ENCODE measurements at regions of chr11 and their contacts with region 1.

Region 1: DNA sequence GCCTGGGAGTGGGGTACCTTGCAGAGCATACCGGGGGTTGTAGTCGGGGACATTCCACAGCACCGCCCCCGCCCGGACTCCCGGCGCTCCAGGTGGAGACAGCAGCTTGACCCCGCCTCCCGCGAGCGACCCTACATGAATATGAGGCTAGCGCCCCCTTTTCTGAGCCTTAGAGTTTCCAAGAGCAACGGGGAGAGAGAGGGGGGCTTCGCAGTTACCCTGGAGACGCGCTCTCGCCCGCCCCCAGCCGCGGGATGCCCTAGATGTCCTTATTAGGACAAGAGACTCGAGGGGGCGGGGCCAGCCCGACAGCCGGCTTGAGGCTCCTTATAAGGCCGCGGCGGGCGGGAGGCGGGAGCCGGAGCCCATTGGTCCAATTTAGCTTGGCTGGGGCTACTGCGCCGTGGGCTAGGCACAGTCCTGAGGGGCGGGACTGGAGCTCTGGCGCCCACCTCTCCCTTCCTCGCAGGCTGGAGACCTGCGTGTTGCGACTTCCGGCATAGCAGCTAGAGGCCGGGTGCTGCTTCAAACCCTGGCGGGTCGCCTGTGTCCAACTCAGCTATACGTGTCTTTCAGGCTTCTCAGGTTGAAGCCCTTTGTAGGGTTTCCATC is 927 bp upstream of the MUS81 start:
- DNase-seq: peak; percentile 97
- H3K4me3 ChIP-seq: peak overlapping the region; percentile 93
- H3K27ac ChIP-seq: peak overlapping the region; percentile 99
- H3K27me3 ChIP-seq: no peaks in the 10 kb centered on the region
- CTCF ChIP-seq: peak; percentile 28; the same call in 1 of the 2 replicates

Region 2: DNA sequence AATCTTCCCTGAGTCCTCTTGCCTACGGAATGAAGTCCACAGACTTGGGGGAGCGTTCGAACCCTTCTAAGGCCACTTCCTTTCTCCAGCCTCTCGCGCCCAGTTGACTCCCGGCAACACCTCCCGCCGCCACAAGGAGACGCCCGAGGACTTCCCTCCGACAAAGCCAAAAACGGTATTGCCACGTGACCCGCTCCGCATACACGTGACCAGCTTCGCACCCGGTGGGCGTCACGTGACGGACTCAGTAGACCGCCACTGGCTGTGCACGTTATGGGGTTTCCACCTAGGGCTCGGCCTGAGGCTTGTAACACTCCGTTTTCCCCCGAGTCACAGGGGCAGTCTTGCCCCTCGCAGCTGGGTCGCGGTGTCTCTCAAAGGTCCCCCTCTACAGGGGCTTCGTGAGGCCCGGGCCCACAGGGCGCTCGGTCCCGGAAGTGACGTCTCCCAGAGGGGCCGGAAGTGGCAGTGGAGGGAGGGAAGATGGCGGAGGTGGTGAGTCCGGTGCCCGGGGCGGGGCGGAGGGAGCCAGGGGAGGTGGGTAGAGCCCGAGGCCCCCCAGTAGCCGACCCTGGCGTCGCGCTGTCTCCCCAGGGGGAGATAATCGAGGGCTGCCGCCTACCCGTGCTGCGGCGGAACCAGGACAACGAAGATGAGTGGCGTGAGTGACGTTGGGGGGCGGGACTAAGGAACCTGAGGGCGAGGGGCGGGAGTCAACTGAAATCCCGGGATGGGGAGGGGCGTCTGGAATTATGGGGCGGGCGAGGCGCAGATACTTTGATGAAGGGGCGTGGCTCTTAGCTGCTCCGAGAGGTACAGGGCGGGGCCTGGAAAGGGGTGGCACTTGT is 147.3 kb before region 1 on chr11 and contains the start of gene KAT5:
- CTCF ChIA-PET with region 1: interaction called, 4 read pairs
- POLR2A ChIA-PET with region 1: interaction called, 11 read pairs
- DNase-seq: peak; percentile 96
- H3K4me3 ChIP-seq: peak within 1 kb of the TSS; percentile 84
- H3K27ac ChIP-seq: peak within 1 kb of the TSS; percentile 99
- H3K27me3 ChIP-seq: peaks cover 5% of the 10 kb centered on the region
- CTCF ChIP-seq: peak; percentile 98
- polyA plus RNA-seq, gene KAT5: 22.6 and 26.1 TPM in 2 replicates

Region 3: DNA sequence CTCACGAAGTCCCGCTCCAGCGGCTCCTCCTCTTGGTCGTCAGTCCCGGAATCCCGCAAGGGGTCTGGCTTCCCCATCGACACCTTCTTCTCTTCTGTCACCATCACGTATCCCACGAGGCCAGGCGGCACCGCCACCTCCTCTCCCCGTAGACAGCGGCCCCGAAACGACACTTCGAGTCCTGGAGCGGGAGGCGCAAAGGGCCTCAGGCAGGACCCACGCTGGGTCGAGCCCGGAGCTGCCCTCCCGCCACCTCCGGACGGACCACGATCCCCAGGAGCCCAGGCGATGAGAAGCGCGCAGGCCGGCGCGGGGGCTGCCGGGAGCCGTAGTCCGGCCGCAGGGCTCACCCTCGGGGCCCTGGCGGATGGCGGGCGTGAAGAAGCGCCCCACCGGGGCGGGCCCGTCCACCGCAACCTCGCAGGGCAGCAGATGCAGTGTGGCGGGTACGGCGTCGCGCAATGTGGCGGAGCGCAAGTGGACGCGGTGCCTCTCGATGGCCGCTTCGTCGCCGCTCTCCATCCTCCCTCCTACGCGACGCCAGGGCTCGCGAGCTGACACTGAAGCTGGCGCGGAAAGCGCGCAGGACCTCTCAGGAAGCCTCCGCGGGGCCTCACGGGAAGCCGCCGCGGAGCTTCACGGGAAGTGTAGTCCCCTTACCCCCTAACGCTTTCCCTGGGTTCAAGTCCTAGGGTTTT is 138.9 kb before region 1 on chr11 and contains the start of gene RNASEH2C:
- CTCF ChIA-PET with region 1: interaction called, 4 read pairs
- POLR2A ChIA-PET with region 1: interaction called, 10 read pairs
- DNase-seq: peak; percentile 50
- H3K4me3 ChIP-seq: peak within 1 kb of the TSS; percentile 87
- H3K27ac ChIP-seq: peak within 1 kb of the TSS; percentile 52
- H3K27me3 ChIP-seq: no peaks in the 10 kb centered on the region
- CTCF ChIP-seq: no peak
- polyA plus RNA-seq, gene RNASEH2C: 14.2 and 20.8 TPM in 2 replicates

Region 4: GRCh38 chr11:65766535-65766934 is 92.8 kb before region 1 on chr11:
- CTCF ChIA-PET with region 1: no interaction called
- POLR2A ChIA-PET with region 1: no interaction called
- DNase-seq: no peak
- H3K4me3 ChIP-seq: no peak overlapping the region
- H3K27ac ChIP-seq: no peak overlapping the region
- H3K27me3 ChIP-seq: no peaks in the 10 kb centered on the region
- CTCF ChIP-seq: no peak

Region 5: DNA sequence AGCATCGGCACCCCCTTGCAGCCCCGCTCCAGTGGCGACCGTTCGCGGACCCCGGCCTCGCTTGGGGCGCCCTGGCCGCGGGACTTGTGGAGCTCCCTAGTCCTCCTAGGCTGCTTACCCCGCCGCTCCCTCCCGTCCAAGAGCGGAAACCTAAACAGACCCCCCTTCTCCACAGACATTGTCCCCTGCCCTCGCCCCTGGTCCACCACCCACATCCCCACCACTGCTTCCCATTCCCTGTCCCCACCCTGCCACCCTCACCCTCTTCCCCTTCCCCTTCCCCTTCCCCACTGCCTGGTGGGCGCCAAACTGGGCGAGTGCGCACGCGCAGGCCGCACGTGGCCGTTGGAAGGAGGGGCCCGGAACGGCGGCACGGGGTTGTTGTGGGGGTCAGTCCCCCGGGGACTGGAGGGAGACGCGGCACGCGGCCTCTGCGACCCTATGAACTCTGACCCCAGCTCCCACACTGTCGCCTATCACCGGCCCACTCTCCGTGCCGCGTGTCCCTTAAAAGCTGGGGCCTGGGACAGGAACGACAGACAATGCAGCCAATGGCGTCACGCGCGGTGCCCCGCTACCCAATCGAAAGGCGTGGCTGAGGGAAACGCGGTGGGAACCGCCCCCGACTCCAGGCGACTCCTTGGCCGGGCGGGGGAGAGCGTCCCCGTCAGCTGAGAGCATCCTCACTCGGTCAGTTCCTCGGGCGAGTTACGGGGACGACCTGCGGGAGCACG is 25.8 kb before region 1 on chr11 and contains the start of gene SNX32:
- CTCF ChIA-PET with region 1: no interaction called
- POLR2A ChIA-PET with region 1: interaction called, 10 read pairs
- DNase-seq: peak; percentile 78
- H3K4me3 ChIP-seq: peak within 1 kb of the TSS; percentile 85
- H3K27ac ChIP-seq: no peak within 1 kb of the TSS
- H3K27me3 ChIP-seq: peaks cover 29% of the 10 kb centered on the region
- CTCF ChIP-seq: no peak
- polyA plus RNA-seq, gene SNX32: 0.30 and 0.57 TPM in 2 replicates

Region 6: GRCh38 chr11:65844231-65845190 is 14.8 kb before region 1 on chr11:
- CTCF ChIA-PET with region 1: interaction called, 7 read pairs
- POLR2A ChIA-PET with region 1: interaction called, 40 read pairs
- DNase-seq: no peak
- H3K4me3 ChIP-seq: no peak overlapping the region
- H3K27ac ChIP-seq: no peak overlapping the region
- H3K27me3 ChIP-seq: no peaks in the 10 kb centered on the region
- CTCF ChIP-seq: no peak

Region 7: GRCh38 chr11:65873318-65874156 is 14.2 kb after region 1 on chr11:
- CTCF ChIA-PET with region 1: interaction called, 35 read pairs
- POLR2A ChIA-PET with region 1: interaction called, 37 read pairs
- DNase-seq: peak; percentile 78
- H3K4me3 ChIP-seq: peak overlapping the region; percentile 76
- H3K27ac ChIP-seq: peak overlapping the region; percentile 68
- H3K27me3 ChIP-seq: no peaks in the 10 kb centered on the region
- CTCF ChIP-seq: no peak

Region 8: GRCh38 chr11:65966499-65967101 is 107.3 kb after region 1 on chr11:
- CTCF ChIA-PET with region 1: no interaction called
- POLR2A ChIA-PET with region 1: no interaction called
- DNase-seq: no peak
- H3K4me3 ChIP-seq: no peak overlapping the region
- H3K27ac ChIP-seq: no peak overlapping the region
- H3K27me3 ChIP-seq: no peaks in the 10 kb centered on the region
- CTCF ChIP-seq: no peak

Region 9: GRCh38 chr11:66069715-66070603 is 210.7 kb after region 1 on chr11 and contains the start of gene PACS1:
- CTCF ChIA-PET with region 1: no interaction called
- POLR2A ChIA-PET with region 1: no interaction called
- DNase-seq: peak; percentile 56
- H3K4me3 ChIP-seq: peak within 1 kb of the TSS; percentile 76
- H3K27ac ChIP-seq: peak within 1 kb of the TSS; percentile 90
- H3K27me3 ChIP-seq: no peaks in the 10 kb centered on the region
- CTCF ChIP-seq: no peak
- polyA plus RNA-seq, gene PACS1: 27.1 and 32.5 TPM in 2 replicates

Measured in AG04450 (cell line).